H1 (cell line): ENCODE measurements at regions of chr17 and their contacts with region 1.

Region 1: GRCh38 chr17:81977211-81978027 is at the start of gene ASPSCR1:
- DNase-seq: peak; percentile 57 to 93
- H3K4me3 ChIP-seq: peak within 1 kb of the TSS; percentile 62 to 88 (median 82)
- H3K27ac ChIP-seq: peak within 1 kb of the TSS; percentile 83
- H3K4me1 ChIP-seq: peaks cover 0 to 7% (median 6%) of the 10 kb centered on the region in 4 experiments; a peak in 5 of 7 replicates
- H3K27me3 ChIP-seq: peaks cover 0 to 19% (median 12%) of the 10 kb centered on the region in 4 experiments; a peak in 5 of 7 replicates
- CTCF ChIP-seq: no peak
- EP300 ChIP-seq: peak in 1 of 2 experiments; percentile 73; a peak in 1 of 3 replicates
- POLR2A ChIP-seq: peak in 1 of 2 experiments; percentile 81; a peak in 2 of 3 replicates
- RAD21 ChIP-seq: no peak
- total RNA-seq, gene ASPSCR1: 41.8 and 43.7 TPM in 2 replicates

Region 2: GRCh38 chr17:81991684-81992305 is 14.4 kb after region 1 on chr17:
- CTCF ChIA-PET with region 1: interaction called, 5 read pairs
- POLR2A ChIA-PET with region 1: interaction called, 40 read pairs
- DNase-seq: no peak
- H3K4me3 ChIP-seq: peak overlapping the region in 1 of 4 experiments; percentile 9; a peak in 2 of 8 replicates
- H3K27ac ChIP-seq: no peak overlapping the region
- H3K4me1 ChIP-seq: peaks cover 0 to 31% (median 27%) of the 10 kb centered on the region in 4 experiments; a peak in 6 of 7 replicates
- H3K27me3 ChIP-seq: no peaks in the 10 kb centered on the region
- CTCF ChIP-seq: no peak
- EP300 ChIP-seq: no peak
- POLR2A ChIP-seq: no peak
- RAD21 ChIP-seq: no peak